ENCODE measurements at regions of chr10 and their contacts with region 1.

Region 1: GRCh38 chr10:101782811-101783735 is at the start of gene NPM3:
- DNase-seq: peak; percentile 85 to 92 (median 90)
- ATAC-seq: peak; percentile 65
- H3K4me3 ChIP-seq: peak within 1 kb of the TSS; percentile 33
- H3K4me1 ChIP-seq: peaks cover 39% of the 10 kb centered on the region
- CTCF ChIP-seq: no peak
- total RNA-seq, gene NPM3: 14.4 to 27.4 (median 15.3) TPM

Region 2: GRCh38 chr10:101595591-101596433 is 187.3 kb before region 1 on chr10:
- intact Hi-C with region 1: loop called (anchors 5 to 10 kb)
- DNase-seq: no peak
- ATAC-seq: peak; percentile 45
- H3K4me3 ChIP-seq: no peak overlapping the region
- H3K4me1 ChIP-seq: no peaks in the 10 kb centered on the region
- CTCF ChIP-seq: no peak

Region 3: DNA sequence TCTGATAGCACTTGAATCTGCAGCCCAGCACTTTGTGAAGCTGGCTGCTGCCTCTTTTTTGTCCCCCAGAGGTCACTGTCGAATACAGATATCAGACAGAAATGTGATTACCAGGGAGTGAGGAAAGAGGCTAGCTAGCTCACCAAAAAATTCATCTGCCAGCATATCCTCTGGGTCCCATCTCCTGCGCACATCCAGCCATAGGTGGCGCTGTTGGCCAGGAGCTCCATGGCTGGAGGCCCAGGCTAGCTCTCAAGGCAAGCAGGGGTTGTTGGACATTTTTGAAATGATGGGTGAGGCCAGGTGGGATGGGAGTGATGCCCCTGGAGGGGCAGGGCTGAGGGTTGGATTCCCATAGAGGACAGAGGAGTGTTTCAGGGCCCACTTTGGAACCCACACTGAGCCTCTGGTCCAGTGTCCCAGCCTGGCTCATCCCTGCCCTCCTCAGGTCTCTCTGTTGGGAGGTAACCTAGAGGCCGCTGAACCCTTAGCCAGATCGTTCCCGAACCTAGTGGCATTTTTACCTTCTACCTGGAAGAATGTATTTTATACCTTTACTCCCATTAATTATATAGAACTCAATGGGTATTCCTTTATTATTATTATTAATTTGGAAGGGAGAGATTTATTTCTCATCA is 180.2 kb before region 1 on chr10:
- intact Hi-C with region 1: loop called (anchors 5 to 10 kb)
- DNase-seq: peak in 2 of 3 donors; percentile 73 to 78
- ATAC-seq: peak; percentile 91
- H3K4me3 ChIP-seq: no peak overlapping the region
- H3K4me1 ChIP-seq: no peaks in the 10 kb centered on the region
- CTCF ChIP-seq: peak; percentile 64